Ascending aorta (tissue), 2 donors: ENCODE measurements at regions of chr20 and their contacts with region 1.

Region 1: GRCh38 chr20:10219452-10219791 is 792 bp downstream of the SNAP25 start:
- DNase-seq: peak in 1 of 2 donors; percentile 84
- H3K4me3 ChIP-seq: peak overlapping the region; percentile 39 to 72
- H3K27ac ChIP-seq: peak overlapping the region; percentile 93 to 98
- H3K4me1 ChIP-seq: no peaks in the 10 kb centered on the region
- H3K27me3 ChIP-seq: no peaks in the 10 kb centered on the region
- CTCF ChIP-seq: no peak

Region 2: DNA sequence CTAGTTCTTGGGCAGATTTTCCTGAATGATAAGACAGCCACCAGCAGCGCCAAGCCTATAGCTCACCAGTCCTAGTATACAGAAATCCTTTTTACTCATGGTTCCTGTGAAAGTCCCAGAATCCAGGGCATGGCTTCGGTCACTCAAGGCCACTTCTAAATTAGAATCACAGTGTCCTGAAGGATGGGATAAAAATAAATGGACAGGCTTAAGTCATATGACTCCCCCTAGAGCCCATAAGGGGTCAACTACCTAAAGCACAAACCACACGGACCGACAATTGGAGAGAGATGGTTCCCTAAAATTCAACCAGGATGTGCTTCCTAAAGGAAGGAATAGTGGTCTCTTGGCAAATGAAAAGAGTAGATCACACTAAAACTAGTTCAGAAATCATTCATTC is 1554.6 kb before region 1 on chr20:
- intact Hi-C with region 1: no loop called
- DNase-seq: no peak
- H3K4me3 ChIP-seq: no peak overlapping the region
- H3K27ac ChIP-seq: no peak overlapping the region
- H3K4me1 ChIP-seq: no peaks in the 10 kb centered on the region
- H3K27me3 ChIP-seq: no peaks in the 10 kb centered on the region
- CTCF ChIP-seq: no peak

Region 3: DNA sequence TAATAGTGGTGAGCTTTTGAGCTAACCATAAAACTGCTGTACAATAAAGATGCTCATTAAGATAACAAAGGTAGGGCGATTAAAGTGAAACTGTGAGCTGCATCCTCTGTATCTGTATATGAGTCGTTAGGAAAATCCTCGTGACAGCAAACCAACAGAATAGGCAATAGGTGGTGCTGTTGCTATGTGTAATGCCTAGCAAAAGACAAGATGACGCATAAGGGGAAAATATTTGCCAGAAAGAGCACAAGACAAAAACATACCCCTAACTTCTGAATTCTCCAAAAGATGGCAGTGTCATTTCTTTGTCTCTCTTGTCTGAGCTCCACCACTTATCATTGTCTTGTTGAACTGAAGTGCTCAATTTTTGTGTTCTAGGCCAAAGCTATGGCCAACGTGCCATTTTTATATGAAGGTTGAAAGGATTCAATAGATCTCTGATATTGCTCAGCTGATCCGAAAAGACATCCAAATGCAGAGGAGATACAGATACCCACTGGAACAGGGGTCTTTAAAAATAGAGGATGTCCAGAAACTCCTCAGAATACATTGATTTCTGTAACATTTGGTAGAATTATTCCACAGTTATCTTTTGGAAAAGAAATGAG is 240.9 kb before region 1 on chr20:
- intact Hi-C with region 1: loop called (anchors 2 kb)
- DNase-seq: peak in 1 of 2 donors; percentile 71
- H3K4me3 ChIP-seq: peak overlapping the region in 1 of 2 donors; percentile 48
- H3K27ac ChIP-seq: peak overlapping the region; percentile 10 to 17
- H3K4me1 ChIP-seq: no peaks in the 10 kb centered on the region
- H3K27me3 ChIP-seq: no peaks in the 10 kb centered on the region
- CTCF ChIP-seq: peak; percentile 72 to 80 (median 79)

Region 4: DNA sequence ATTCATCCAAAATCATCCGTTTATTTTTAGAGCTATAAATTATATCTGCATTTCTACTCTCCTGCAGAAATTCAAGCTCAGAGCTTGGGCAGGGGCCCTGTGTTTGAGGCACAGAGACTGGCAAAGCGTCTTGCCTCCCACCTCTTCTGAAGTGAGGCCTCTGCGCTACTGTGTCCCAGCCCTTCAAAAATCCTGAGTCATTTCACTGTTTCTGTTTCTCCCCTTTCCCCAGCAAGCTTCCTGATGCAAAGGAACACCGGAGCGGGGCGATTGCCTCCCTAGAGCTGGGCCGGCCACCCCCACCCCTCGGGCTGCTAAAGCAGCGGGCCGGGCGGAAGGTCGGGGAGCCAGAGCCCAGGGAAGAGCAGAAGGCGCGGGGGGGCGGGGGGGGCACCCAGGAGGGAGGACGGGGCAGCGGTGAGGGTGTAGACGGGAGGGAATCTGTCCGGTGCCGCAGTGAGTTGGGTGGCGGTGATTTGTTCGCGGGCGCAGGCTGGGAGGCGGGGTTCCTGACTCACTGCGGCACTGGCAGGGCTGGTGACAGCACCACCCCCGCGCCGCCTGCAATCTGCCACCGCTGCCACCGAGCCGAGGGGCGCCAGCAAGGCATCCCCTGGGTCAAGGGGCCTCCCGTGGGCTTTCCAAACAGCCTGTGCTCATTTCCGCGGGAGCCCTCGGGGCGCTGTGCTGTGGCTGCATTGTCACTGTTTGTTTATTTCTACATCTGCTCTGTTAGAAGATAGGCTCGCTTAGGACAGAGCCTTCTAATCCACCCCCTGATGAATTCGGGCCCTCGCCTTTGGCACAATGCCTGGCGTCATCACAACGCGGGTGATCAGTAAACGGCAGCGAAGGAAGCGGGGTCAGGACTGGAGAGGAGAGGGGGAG is 47.3 kb before region 1 on chr20:
- intact Hi-C with region 1: loop called (anchors 2 kb)
- DNase-seq: peak; percentile 15 to 79
- H3K4me3 ChIP-seq: peak overlapping the region; percentile 63 to 70
- H3K27ac ChIP-seq: peak overlapping the region; percentile 37 to 38
- H3K4me1 ChIP-seq: peaks cover 0 to 4% of the 10 kb centered on the region in 2 donors
- H3K27me3 ChIP-seq: no peaks in the 10 kb centered on the region
- CTCF ChIP-seq: peak in 1 of 3 experiments; percentile 31

Region 5: GRCh38 chr20:10209091-10209490 is 10.3 kb before region 1 on chr20:
- intact Hi-C with region 1: no loop called
- DNase-seq: no peak
- H3K4me3 ChIP-seq: no peak overlapping the region
- H3K27ac ChIP-seq: no peak overlapping the region
- H3K4me1 ChIP-seq: no peaks in the 10 kb centered on the region
- H3K27me3 ChIP-seq: no peaks in the 10 kb centered on the region
- CTCF ChIP-seq: no peak

Region 6: DNA sequence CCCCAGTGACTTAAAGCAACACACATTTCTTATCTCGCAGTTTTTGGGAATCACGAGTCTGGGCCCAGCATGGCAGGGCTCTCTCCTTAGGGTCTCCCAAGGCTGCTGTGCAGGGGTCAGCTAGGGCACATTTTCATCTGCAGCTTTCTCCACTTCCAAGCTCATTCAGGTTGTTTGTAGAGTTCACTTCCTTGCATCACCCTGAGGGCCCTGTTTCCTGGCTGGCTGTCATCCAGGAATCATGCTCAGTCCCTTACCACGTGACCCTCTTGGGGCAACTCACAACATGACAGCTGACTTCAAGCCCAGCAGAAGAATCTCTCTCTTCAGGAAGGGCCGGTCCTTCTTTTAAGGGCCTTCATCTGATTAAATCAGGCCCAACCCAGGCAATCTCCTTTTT is 20.5 kb after region 1 on chr20:
- intact Hi-C with region 1: no loop called
- DNase-seq: no peak
- H3K4me3 ChIP-seq: no peak overlapping the region
- H3K27ac ChIP-seq: no peak overlapping the region
- H3K4me1 ChIP-seq: no peaks in the 10 kb centered on the region
- H3K27me3 ChIP-seq: no peaks in the 10 kb centered on the region
- CTCF ChIP-seq: no peak

Region 7: DNA sequence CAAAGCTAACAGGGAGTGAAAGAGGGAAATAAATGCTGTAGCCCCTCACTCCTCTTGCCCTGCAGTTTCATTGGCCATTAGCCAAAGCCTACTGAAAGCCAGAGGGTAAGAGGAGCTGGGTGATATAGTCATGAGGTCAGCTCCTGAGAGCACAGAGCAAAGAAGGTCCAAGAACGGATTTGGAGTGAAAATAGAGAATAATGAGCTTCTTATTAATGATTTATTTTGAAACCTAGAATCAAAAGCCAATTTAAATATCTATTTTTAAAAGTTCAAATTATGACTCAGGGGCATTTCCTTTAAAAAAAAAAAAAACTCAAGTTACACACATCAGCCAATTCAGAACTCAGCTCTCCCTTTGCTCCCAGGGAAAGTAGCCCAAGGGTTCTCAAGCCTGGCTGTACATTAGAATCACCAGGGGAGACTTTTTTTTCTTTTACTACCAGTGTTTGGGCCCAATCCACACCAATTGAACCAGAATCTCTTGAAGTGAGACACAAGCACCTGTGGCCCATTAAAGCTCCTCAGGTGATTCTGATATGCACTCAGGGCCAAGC is 78.3 kb after region 1 on chr20:
- intact Hi-C with region 1: loop called (anchors 5 kb)
- DNase-seq: no peak
- H3K4me3 ChIP-seq: no peak overlapping the region
- H3K27ac ChIP-seq: peak overlapping the region; percentile 77 to 81
- H3K4me1 ChIP-seq: peaks cover 8 to 29% of the 10 kb centered on the region in 2 donors
- H3K27me3 ChIP-seq: no peaks in the 10 kb centered on the region
- CTCF ChIP-seq: no peak

Region 8: GRCh38 chr20:10427060-10427692 is 207.8 kb after region 1 on chr20:
- intact Hi-C with region 1: loop called (anchors 1 kb)
- DNase-seq: peak in 1 of 2 donors; percentile 71
- H3K4me3 ChIP-seq: no peak overlapping the region
- H3K27ac ChIP-seq: no peak overlapping the region
- H3K4me1 ChIP-seq: peaks cover 3 to 8% of the 10 kb centered on the region in 2 donors
- H3K27me3 ChIP-seq: no peaks in the 10 kb centered on the region
- CTCF ChIP-seq: peak; percentile 58 to 81 (median 76)

Region 9: GRCh38 chr20:10434467-10434831 is 215.0 kb after region 1 on chr20:
- intact Hi-C with region 1: loop called (anchors 2 kb)
- DNase-seq: peak; percentile 82 to 97
- H3K4me3 ChIP-seq: peak overlapping the region; percentile 86 to 96
- H3K27ac ChIP-seq: peak overlapping the region; percentile 83 to 84
- H3K4me1 ChIP-seq: peaks cover 8 to 19% of the 10 kb centered on the region in 2 donors
- H3K27me3 ChIP-seq: no peaks in the 10 kb centered on the region
- CTCF ChIP-seq: no peak

Region 10: GRCh38 chr20:10647465-10647864 is 428.0 kb after region 1 on chr20:
- intact Hi-C with region 1: loop called (anchors 10 kb)
- DNase-seq: no peak
- H3K4me3 ChIP-seq: no peak overlapping the region
- H3K27ac ChIP-seq: peak overlapping the region; percentile 93 to 100
- H3K4me1 ChIP-seq: peaks cover 18 to 63% of the 10 kb centered on the region in 2 donors
- H3K27me3 ChIP-seq: no peaks in the 10 kb centered on the region
- CTCF ChIP-seq: peak; percentile 23 to 53 (median 29)